ENCODE measurements at regions of chr9 and their contacts with region 1.

Region 1: GRCh38 chr9:96574931-96575351 is 44.7 kb downstream of the CDC14B start:
- DNase-seq: no peak
- ATAC-seq: peak; percentile 50

Region 2: GRCh38 chr9:96619491-96620154 is 44.7 kb after region 1 on chr9 and contains the start of gene CDC14B:
- intact Hi-C with region 1: loop called (anchors 5 kb)
- DNase-seq: peak; percentile 95
- ATAC-seq: peak; percentile 82
- total RNA-seq, gene CDC14B: 14.5 TPM